ACHN (cell line): ENCODE measurements at regions of chr11 and their contacts with region 1.

Region 1: DNA sequence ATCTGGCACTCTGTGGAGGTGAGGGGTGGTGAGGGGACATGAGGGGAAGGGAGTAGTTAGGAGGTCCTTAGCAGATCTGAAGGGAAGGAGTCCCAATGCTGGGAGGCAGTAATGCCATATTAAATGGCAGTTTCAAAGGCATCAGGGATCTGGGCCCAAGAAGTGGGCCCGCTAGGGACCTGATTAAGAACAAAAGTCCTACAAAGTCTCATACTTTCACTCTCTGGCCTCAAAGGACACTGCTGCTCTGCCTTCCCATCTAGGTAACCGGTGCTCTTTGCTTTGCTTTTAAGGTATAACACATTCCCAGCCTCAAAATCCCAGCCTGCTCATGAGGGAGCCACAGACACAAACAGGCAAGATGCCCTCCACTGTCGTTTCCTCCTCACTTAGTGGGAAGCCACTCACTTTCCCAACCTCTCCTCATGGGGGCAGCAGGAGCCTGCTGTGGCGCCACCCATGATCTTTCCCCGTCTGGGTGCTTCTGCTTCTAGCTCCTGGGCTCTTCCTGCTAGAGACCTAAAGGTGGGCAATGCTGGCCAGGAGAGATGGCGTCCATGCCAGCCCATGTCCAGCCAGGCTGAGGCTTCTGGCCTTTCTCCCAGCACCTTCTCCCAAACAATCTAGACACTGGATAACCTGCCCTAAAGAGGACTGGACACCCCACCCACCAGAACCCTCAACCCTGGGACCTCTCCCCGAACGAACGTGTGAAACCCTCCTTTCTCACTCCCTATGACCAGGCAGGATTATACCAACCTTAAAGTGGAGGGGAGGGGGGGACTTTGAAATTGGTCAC is 68.3 kb downstream of the PLEKHA7 start:
- DNase-seq: peak; percentile 60

Region 2: DNA sequence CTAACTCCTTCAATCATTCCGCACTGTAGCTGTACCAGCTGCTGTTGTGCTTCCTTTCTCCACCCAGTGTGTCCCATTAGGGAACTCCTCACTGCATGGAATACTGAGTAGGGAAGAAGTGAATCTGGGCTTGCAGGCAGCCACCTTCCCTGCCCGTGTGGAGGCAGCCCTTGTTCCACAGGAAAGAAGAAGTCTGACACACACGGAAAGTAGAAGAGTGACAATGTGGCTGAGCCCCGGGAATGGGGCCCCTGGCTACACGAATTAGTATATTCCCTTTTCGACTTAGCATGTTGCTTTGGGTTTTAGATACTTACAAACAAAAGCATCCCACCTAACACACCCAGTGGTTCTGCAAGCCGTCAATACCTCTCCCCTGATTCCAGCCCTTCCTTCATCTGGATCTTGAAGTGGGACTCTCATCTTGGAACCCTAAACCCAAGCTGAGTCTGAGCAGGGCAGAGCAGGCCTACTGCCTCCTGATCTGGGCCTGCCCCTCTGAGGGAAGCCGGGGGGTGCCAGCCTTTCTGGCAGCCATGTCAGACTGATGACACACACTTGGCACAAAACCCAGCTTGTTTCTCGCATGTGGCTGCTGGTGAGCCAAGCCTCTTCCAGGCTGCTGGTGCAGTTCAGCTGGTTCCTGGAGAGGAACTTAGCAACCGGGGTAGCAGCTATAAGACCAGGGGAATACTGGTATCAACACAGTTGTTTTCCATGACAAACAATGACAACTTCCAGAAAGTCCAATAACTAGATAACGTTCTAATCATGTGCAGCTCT is 135.8 kb before region 1 on chr11:
- in situ Hi-C with region 1: no loop called
- DNase-seq: peak; percentile 11

Region 3: DNA sequence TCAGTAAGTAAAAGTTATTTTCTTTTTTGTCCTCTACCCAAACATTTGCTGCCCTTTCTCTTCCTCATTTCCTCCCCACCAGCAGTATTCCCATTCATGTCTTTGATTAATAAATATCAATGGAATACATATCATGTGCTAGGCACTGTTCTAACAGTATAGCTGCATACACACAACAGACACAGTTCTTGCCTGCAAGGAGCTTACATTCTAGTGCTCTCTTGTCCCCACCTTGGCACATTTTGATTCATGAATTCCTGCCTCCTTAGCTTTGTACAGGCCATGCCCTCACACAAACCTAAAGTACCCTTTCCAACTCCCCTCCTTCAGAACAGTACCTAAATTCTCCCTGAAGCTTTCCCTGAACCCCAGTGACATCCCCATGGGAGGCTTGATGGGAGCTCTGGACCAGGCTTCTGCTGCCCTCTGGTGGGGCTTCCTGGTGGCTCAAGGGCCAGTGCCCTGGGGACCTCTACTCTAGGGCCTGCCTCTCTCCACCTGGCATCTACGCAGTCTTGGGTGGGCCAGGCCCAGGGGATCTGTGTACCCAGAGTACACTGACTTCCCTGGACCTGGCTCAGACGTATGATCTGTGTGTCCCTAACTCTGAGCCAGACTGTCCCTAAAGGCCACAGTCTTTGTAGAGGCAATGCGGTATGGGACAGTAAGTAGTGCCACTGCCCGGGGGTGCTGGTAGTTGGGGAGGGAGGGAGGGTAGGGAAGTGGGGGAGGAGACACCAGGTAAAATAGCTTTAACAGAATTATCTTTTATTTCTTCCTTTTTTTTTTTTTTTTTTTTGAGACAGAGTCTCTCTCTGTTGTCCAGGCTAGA is 117.5 kb after region 1 on chr11:
- in situ Hi-C with region 1: loop called (anchors 25 kb)
- DNase-seq: peak; percentile 60